Activated naive CD4-positive, alpha-beta T cell treated with anti-CD3 and anti-CD28 coated beads for 36 hours (primary cell): ENCODE measurements at regions of chr6 and their contacts with region 1.

Region 1: DNA sequence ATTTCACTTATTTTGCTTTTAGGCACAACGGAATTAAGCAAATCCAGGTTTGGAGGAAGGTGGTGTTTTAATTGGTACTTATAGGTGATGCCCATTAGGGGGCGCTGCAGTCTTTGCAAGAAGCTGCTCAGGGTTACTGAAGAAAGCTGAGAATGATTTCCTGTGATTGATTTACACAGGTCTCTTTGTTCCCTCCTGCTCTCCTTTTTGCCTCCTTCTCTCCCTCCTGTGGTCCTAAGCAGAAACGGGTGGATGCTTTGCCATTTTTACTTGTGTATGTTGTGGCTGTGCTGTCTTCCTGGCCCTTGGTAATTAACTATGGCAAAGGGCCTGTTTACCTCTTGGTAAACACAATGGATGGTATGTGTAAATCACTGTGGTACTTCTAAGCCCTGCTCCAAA is 97.8 kb downstream of the ANKS1A start:
- DNase-seq: peak; percentile 81
- H3K4me3 Mint-ChIP-seq: no peak overlapping the region
- H3K27ac Mint-ChIP-seq: no peak overlapping the region
- H3K4me1 Mint-ChIP-seq: no peaks in the 10 kb centered on the region
- H3K27me3 Mint-ChIP-seq: no peaks in the 10 kb centered on the region

Region 2: DNA sequence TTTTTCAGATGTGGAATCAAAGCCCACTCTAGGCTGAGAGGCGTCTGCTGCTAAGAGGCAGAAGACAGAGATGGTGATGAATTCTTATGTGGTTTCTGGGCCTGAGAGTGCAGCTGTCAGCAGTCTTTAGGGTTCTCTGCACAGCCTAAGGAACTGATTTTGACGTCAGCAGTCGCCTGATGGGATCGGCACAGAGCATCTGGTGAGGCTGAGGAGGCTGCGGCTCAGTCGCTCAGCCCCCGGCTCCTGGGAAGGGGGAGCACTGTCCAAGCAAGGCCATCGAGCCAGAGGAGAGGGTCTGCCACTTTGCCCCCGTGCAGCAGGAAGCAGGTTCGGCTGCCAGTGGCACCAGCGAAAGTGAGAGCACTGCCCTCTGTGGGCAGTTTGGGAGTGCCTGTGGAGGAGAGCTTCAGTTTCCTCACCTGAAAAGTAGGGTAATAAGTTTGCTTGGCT is 61.8 kb after region 1 on chr6:
- CTCF ChIA-PET with region 1: interaction called, 3 read pairs
- intact Hi-C with region 1: loop called (anchors 5 kb)
- DNase-seq: peak; percentile 51
- H3K4me3 Mint-ChIP-seq: no peak overlapping the region
- H3K27ac Mint-ChIP-seq: no peak overlapping the region
- H3K4me1 Mint-ChIP-seq: peaks cover 18% of the 10 kb centered on the region
- H3K27me3 Mint-ChIP-seq: no peaks in the 10 kb centered on the region

Region 3: GRCh38 chr6:35128496-35128895 is 141.7 kb after region 1 on chr6:
- CTCF ChIA-PET with region 1: interaction called, 10 read pairs
- intact Hi-C with region 1: no loop called
- DNase-seq: no peak
- H3K4me3 Mint-ChIP-seq: no peak overlapping the region
- H3K27ac Mint-ChIP-seq: no peak overlapping the region
- H3K4me1 Mint-ChIP-seq: no peaks in the 10 kb centered on the region
- H3K27me3 Mint-ChIP-seq: peaks cover 2% of the 10 kb centered on the region

Region 4: GRCh38 chr6:35139908-35140655 is 153.2 kb after region 1 on chr6:
- CTCF ChIA-PET with region 1: interaction called, 44 read pairs
- intact Hi-C with region 1: loop called (anchors 1 kb)
- DNase-seq: peak; percentile 67
- H3K4me3 Mint-ChIP-seq: no peak overlapping the region
- H3K27ac Mint-ChIP-seq: no peak overlapping the region
- H3K4me1 Mint-ChIP-seq: peaks cover 15% of the 10 kb centered on the region
- H3K27me3 Mint-ChIP-seq: peaks cover 13% of the 10 kb centered on the region

Region 5: DNA sequence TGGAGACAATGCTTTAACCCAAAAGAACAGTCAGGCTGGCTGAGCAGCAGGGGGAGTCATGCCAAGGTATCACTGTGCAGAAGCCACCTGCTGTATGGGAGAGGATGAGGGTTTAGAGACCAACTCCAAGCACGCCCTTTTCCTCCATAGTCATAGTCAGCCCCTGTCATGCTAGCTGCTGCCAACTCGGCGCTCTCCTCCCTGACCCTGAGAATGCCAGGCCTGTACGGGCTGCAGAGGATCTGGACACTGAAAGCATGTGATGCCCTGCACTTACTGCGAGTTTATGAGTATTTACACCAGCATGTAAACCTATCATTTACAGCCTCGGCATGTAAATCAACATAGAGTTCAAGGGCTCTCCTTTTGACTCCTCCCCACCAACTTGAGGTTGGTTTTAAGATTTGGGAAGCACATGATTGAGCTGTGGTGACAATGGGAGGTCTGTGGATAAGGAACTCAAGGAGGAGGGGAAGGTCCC is 215.3 kb after region 1 on chr6:
- CTCF ChIA-PET with region 1: interaction called, 6 read pairs
- intact Hi-C with region 1: loop called (anchors 1 kb)
- DNase-seq: no peak
- H3K4me3 Mint-ChIP-seq: no peak overlapping the region
- H3K27ac Mint-ChIP-seq: no peak overlapping the region
- H3K4me1 Mint-ChIP-seq: no peaks in the 10 kb centered on the region
- H3K27me3 Mint-ChIP-seq: peaks cover 15% of the 10 kb centered on the region